ENCODE measurements at regions of chr7 and their contacts with region 1.

Region 1: DNA sequence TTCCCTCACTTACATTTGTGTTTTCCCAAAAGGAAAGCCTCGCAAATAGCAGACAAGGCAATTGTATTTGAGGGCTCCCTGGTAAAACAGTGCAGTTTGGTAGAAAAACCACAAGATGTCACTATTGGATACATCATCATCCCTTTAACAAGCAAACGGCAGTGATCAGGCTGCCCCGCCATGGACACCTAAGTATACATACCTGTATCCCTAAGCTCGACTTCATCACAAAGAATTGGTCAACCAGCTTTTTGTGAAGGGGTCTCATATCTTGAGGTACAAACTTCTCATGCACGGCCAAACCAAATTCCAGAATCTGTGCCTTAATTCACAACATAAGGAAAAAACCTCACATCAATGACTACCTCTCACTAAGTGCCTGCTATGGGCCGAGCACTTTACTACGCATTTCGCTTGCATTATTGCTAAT is 179.5 kb upstream of the IMMP2L start:
- DNase-seq: peak; percentile 44 to 56
- H3K4me3 ChIP-seq: no peak overlapping the region
- H3K27ac ChIP-seq: no peak overlapping the region
- H3K4me1 ChIP-seq: no peaks in the 10 kb centered on the region
- H3K27me3 ChIP-seq: no peaks in the 10 kb centered on the region
- CTCF ChIP-seq: peak; percentile 76

Region 2: GRCh38 chr7:111855161-111855856 is 113.5 kb after region 1 on chr7:
- CTCF ChIA-PET with region 1: interaction called, 3 read pairs
- POLR2A ChIA-PET with region 1: no interaction called
- intact Hi-C with region 1: loop called (anchors 5 kb)
- DNase-seq: peak in 1 of 2 experiments; percentile 28
- H3K4me3 ChIP-seq: no peak overlapping the region
- H3K27ac ChIP-seq: no peak overlapping the region
- H3K4me1 ChIP-seq: no peaks in the 10 kb centered on the region
- H3K27me3 ChIP-seq: no peaks in the 10 kb centered on the region
- CTCF ChIP-seq: peak; percentile 60

Region 3: DNA sequence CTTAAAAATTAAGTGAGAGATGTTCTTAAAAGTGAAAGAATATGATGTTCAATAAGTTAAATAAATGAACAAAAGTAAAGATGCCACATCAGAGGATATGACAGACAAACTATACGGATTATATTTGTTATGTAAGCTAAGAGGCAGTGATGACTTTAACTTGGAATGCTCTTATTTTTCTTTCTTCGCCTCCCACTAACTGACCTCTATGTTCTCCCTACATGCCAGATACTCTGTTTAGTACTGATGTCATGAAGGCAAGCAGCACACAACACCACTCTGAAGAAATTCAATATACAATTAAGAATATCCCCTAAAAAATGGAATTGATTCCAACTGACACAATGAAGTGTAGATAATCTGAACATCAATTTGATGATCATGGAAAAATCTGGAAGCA is 241.0 kb after region 1 on chr7:
- CTCF ChIA-PET with region 1: no interaction called
- POLR2A ChIA-PET with region 1: no interaction called
- intact Hi-C with region 1: loop called (anchors 1 kb)
- DNase-seq: no peak
- H3K4me3 ChIP-seq: no peak overlapping the region
- H3K27ac ChIP-seq: no peak overlapping the region
- H3K4me1 ChIP-seq: peaks cover 27% of the 10 kb centered on the region
- H3K27me3 ChIP-seq: no peaks in the 10 kb centered on the region
- CTCF ChIP-seq: no peak

Region 4: GRCh38 chr7:113698556-113699220 is 1956.9 kb after region 1 on chr7:
- CTCF ChIA-PET with region 1: no interaction called
- POLR2A ChIA-PET with region 1: no interaction called
- intact Hi-C with region 1: loop called (anchors 2 kb)
- DNase-seq: no peak
- H3K4me3 ChIP-seq: no peak overlapping the region
- H3K27ac ChIP-seq: no peak overlapping the region
- H3K4me1 ChIP-seq: no peaks in the 10 kb centered on the region
- H3K27me3 ChIP-seq: no peaks in the 10 kb centered on the region
- CTCF ChIP-seq: peak; percentile 76

Region 5: DNA sequence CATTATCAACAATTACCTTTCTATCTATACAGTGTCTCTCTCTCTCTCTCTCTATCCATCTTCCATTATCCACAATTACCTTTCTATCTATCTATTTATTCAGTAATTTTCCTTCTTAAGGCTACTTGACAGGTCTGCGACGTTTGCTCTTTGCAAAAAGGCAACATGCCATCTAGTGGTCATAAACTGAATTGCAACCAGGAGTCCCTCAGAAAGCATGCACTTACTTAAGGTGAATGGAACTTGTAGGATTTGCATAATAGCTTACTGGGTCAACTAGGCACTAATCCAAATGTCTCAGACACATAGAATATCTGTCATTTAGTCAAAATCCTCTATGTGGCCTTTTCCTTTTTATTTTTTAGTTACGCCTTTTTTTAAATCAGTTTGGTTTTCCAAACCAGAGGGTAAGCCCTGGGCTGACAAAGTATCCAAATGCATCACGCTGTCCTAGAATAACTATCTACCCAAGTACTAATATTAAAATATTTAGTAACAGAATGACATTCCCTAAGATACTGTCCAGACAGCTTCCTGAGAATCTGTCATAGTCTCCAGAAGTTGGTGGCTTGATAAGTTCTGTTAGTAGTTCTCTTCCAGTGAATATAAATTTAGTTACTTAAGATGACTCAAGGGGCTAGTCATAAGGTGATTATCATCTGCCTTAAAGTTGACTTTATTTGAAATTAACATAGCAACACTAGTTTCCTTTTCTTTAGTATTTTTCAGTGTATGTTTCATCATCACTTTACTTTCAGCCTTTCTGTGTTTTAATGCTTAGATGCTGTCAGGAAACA is 1968.7 kb after region 1 on chr7:
- CTCF ChIA-PET with region 1: no interaction called
- POLR2A ChIA-PET with region 1: no interaction called
- intact Hi-C with region 1: loop called (anchors 5 kb)
- DNase-seq: peak; percentile 45 to 66
- H3K4me3 ChIP-seq: no peak overlapping the region
- H3K27ac ChIP-seq: no peak overlapping the region
- H3K4me1 ChIP-seq: no peaks in the 10 kb centered on the region
- H3K27me3 ChIP-seq: no peaks in the 10 kb centered on the region
- CTCF ChIP-seq: peak; percentile 97

Measured in PC-9 (cell line).